Activated CD4-positive, alpha-beta T cell treated with anti-CD3 and anti-CD28 coated beads for 36 hours (primary cell): ENCODE measurements at regions of chr10 and their contacts with region 1.

Region 1: DNA sequence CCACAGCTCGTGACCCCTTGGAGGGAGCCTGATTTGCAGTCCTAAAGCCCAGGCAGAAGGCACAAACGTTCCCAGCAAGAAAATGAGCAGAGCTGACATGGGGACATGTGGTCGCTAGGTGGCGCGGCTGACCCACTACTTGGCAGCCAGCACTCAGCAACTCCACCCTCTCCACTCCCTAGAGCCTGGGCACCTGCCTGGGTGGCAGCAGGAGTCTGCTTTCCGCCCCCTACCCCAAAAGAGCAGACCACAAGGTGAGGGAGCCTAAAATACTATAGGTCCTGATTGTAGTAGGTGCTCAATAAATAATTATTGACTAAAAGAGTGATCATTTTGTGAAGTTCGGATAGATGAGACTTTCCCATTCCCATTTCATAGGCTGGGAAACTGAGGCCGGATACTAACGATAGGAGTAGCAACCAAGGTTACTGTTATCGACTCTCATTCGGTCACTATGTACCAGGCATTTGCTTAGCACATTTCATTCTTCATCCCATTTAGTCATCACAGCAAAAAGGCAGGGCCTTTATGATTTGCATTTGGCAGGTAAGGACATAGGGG is 57.4 kb downstream of the NEUROG3 start:
- DNase-seq: peak; percentile 90
- ATAC-seq: peak; percentile 96
- H3K4me3 Mint-ChIP-seq: no peak overlapping the region
- H3K27ac Mint-ChIP-seq: no peak overlapping the region
- H3K4me1 Mint-ChIP-seq: no peaks in the 10 kb centered on the region
- H3K27me3 Mint-ChIP-seq: peaks cover 6% of the 10 kb centered on the region

Region 2: DNA sequence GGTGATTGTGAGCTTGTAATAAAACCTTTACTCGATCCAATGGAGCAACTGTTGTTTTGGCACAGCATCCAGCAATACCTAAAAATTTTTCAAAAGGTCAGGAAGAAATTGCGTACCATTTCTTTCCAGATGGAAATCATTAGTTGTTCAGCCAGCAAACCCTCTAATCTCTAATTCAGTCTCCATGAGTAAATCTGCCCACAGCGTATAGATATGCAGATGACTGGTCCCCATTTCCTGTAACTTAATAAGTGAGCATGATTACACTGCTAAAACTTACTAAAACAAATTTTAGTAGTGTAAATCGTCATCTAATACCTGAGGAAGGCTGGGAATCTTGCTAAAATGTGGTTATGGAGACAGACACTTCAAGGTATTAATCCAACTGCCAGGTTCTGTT is 999.0 kb before region 1 on chr10:
- CTCF ChIA-PET with region 1: no interaction called
- POLR2A ChIA-PET with region 1: interaction called, 10 read pairs
- intact Hi-C with region 1: no loop called
- DNase-seq: no peak
- ATAC-seq: no peak
- H3K4me3 Mint-ChIP-seq: no peak overlapping the region
- H3K27ac Mint-ChIP-seq: no peak overlapping the region
- H3K4me1 Mint-ChIP-seq: peaks cover 6% of the 10 kb centered on the region
- H3K27me3 Mint-ChIP-seq: no peaks in the 10 kb centered on the region

Region 3: GRCh38 chr10:69474742-69475432 is 40.9 kb before region 1 on chr10:
- CTCF ChIA-PET with region 1: no interaction called
- POLR2A ChIA-PET with region 1: no interaction called
- intact Hi-C with region 1: no loop called
- DNase-seq: no peak
- ATAC-seq: no peak
- H3K4me3 Mint-ChIP-seq: no peak overlapping the region
- H3K27ac Mint-ChIP-seq: no peak overlapping the region
- H3K4me1 Mint-ChIP-seq: no peaks in the 10 kb centered on the region
- H3K27me3 Mint-ChIP-seq: no peaks in the 10 kb centered on the region

Region 4: DNA sequence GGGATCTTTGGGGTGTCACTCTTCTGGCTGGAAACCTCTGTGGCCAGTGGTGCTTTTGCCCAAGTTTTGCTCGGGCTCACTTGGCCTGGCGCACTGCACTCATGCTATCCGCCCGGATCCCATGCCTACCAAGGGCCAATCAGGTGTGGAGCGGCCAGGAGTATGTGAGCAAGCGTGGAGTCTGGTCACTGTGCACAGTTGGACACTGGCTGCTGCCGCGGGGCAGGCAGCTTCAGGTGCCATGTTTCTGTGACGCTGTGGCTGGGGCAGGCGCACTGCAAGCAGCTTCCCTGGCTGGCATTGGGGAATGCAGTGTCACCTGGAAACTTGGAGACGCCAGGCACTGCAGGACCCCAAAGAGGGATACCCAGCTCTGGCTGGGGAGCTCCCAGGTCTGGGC is 12.2 kb after region 1 on chr10:
- CTCF ChIA-PET with region 1: interaction called, 22 read pairs
- POLR2A ChIA-PET with region 1: no interaction called
- intact Hi-C with region 1: no loop called
- DNase-seq: no peak
- ATAC-seq: no peak
- H3K4me3 Mint-ChIP-seq: no peak overlapping the region
- H3K27ac Mint-ChIP-seq: no peak overlapping the region
- H3K4me1 Mint-ChIP-seq: no peaks in the 10 kb centered on the region
- H3K27me3 Mint-ChIP-seq: peaks cover 2% of the 10 kb centered on the region

Region 5: GRCh38 chr10:69629897-69630650 is 114.3 kb after region 1 on chr10 and contains the start of gene FAM241B:
- CTCF ChIA-PET with region 1: interaction called, 125 read pairs
- POLR2A ChIA-PET with region 1: no interaction called
- intact Hi-C with region 1: no loop called
- DNase-seq: peak; percentile 89
- ATAC-seq: peak; percentile 95
- H3K4me3 Mint-ChIP-seq: peak within 1 kb of the TSS; percentile 63
- H3K27ac Mint-ChIP-seq: peak within 1 kb of the TSS; percentile 47
- H3K4me1 Mint-ChIP-seq: peaks cover 16% of the 10 kb centered on the region
- H3K27me3 Mint-ChIP-seq: no peaks in the 10 kb centered on the region
- total RNA-seq, gene FAM241B: 6.3 to 9.6 TPM

Region 6: GRCh38 chr10:69716711-69717560 is 201.2 kb after region 1 on chr10:
- CTCF ChIA-PET with region 1: interaction called, 19 read pairs
- POLR2A ChIA-PET with region 1: no interaction called
- intact Hi-C with region 1: loop called (anchors 1 to 5 kb)
- DNase-seq: peak; percentile 82
- ATAC-seq: peak; percentile 69
- H3K4me3 Mint-ChIP-seq: no peak overlapping the region
- H3K27ac Mint-ChIP-seq: no peak overlapping the region
- H3K4me1 Mint-ChIP-seq: no peaks in the 10 kb centered on the region
- H3K27me3 Mint-ChIP-seq: no peaks in the 10 kb centered on the region

Region 7: DNA sequence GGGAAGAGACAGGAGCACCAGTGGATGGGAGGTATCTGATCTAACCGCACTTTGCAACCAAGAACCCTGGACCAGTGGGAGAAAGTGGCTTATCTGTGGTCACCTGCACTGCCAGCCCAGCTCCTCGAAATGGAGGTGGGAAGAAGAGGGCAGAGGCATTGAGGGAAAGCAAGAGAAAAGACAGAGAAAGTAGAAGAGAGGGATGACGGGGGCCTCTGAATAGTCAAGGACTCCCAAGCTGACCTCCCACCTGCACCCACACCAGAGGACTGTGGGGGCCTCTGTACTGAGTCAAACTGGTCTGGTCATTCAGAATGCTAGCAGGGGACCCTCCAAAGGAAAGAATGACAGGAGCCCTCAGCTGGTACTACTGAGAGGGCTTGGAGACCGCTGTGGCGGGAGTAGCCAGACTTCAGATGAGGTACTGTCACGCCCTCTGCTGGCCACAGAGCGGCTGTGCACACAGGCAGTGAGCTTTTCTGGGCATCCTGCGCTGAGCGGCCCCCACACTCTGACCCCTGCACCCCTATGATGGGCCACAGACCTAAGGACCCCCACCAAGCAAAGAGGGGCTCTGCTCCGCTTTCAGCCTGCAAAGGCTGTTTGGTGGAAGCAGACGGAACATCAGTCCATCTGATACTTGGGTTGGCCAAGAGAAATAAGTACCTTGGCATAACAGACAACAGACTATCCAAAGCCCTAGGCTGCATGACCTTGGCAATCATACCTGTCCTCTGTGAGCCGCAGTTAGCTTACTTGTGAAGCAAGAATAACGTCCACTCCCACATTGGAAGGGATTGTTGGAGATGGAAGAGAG is 398.8 kb after region 1 on chr10:
- CTCF ChIA-PET with region 1: no interaction called
- POLR2A ChIA-PET with region 1: no interaction called
- intact Hi-C with region 1: loop called in 1 of 2 experiments (anchors 2 kb)
- DNase-seq: peak; percentile 82
- ATAC-seq: peak; percentile 83
- H3K4me3 Mint-ChIP-seq: no peak overlapping the region
- H3K27ac Mint-ChIP-seq: no peak overlapping the region
- H3K4me1 Mint-ChIP-seq: no peaks in the 10 kb centered on the region
- H3K27me3 Mint-ChIP-seq: peaks cover 6% of the 10 kb centered on the region